Vagina (tissue), 2 donors: ENCODE measurements at regions of chr2 and their contacts with region 1.

Region 1: GRCh38 chr2:217886720-217887309 is 116.0 kb downstream of the TNS1 start:
- DNase-seq: no peak
- H3K4me3 ChIP-seq: no peak overlapping the region
- H3K27ac ChIP-seq: peak overlapping the region; percentile 3
- H3K4me1 ChIP-seq: peaks cover 26% of the 10 kb centered on the region
- H3K27me3 ChIP-seq: no peaks in the 10 kb centered on the region
- CTCF ChIP-seq: peak; percentile 77 to 90 (median 80)
- POLR2A ChIP-seq: no peak

Region 2: DNA sequence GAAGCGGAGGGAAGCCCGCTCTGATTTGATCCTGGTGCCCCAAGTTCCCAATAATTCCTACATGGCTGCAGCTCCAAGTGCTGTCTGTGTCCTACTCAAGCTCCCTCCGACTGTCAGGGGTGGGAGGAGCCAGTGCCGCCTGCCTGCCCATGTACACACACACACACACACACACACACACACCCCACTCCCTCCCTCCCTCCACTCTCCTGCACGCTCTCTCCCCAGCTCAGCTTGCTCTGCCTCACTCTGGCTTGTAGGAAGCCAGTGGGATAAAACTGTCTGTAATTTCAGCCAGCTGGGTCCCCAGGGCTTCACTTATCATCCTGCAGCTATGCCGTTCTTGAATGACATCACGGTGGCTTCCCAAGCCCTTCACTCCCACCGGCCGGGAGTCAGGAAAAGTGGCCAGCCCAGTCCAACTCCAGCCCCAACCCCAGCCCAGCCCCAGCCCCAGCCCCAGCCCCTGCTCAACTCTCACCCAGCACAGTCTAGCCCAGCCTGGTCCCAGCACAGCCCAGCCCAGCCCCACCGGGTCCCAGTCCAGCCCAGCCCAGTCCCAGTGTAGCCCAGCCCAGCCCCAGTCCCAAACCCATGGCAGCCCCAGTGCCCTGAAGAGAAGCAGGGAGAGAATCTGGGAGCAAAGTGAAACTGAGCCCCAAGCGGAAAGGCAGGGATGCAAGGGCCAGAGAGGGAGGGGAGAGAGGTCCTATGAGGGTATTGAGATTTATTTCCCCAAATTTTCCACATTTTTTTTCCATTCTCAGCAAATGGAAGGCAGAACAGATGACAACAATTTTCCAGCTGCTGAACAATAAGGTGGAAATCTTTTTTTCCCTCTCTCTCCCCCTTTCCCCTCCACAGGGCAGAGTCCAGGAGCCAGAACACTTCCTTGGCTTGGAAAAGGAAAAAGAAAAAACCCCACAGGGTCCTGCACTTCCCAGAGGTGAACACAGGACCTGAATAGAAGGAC is 28.0 kb before region 1 on chr2:
- intact Hi-C with region 1: no loop called
- DNase-seq: no peak
- H3K4me3 ChIP-seq: peak overlapping the region; percentile 22 to 32
- H3K27ac ChIP-seq: peak overlapping the region; percentile 87
- H3K4me1 ChIP-seq: peaks cover 50% of the 10 kb centered on the region
- H3K27me3 ChIP-seq: no peaks in the 10 kb centered on the region
- CTCF ChIP-seq: no peak
- POLR2A ChIP-seq: no peak

Region 3: DNA sequence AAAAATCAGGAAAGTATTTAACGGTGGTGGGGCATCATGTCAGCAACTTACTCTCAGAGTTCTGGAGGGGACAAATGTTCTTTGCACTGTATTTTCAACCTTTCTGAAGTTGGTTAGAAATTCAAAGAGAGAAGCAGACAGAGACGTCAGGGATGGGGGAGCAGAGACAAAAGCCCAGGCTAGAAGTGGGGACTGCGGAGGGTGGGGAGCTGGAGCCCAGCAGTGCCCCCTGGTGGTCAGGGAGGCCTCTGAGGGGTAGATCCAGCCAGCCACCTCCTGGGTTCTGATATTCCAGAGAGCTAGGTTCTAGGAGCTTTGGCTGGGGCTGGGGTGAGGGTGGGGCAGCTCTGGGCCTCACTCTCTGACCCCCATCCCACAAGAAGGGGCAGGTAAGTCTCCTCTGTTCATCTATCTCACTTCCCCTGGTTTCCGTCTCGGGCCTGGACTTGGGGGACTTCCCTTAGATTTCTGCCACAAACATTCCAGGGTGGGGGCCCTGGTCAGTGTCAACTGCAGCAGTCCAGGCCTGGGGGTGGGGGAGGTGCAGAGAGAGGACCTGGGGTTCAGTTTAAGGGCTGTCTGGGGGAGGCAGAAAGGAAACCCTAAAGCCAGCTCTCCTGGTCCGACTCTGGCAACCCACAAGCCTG is 107.1 kb after region 1 on chr2:
- intact Hi-C with region 1: loop called (anchors 2 kb)
- DNase-seq: no peak
- H3K4me3 ChIP-seq: no peak overlapping the region
- H3K27ac ChIP-seq: peak overlapping the region; percentile 92
- H3K4me1 ChIP-seq: peaks cover 72% of the 10 kb centered on the region
- H3K27me3 ChIP-seq: no peaks in the 10 kb centered on the region
- CTCF ChIP-seq: peak; percentile 47 to 58 (median 58)
- POLR2A ChIP-seq: no peak